Cardiac septum (tissue), 1 donor: ENCODE measurements at regions of chr14 and their contacts with region 1.

Region 1: DNA sequence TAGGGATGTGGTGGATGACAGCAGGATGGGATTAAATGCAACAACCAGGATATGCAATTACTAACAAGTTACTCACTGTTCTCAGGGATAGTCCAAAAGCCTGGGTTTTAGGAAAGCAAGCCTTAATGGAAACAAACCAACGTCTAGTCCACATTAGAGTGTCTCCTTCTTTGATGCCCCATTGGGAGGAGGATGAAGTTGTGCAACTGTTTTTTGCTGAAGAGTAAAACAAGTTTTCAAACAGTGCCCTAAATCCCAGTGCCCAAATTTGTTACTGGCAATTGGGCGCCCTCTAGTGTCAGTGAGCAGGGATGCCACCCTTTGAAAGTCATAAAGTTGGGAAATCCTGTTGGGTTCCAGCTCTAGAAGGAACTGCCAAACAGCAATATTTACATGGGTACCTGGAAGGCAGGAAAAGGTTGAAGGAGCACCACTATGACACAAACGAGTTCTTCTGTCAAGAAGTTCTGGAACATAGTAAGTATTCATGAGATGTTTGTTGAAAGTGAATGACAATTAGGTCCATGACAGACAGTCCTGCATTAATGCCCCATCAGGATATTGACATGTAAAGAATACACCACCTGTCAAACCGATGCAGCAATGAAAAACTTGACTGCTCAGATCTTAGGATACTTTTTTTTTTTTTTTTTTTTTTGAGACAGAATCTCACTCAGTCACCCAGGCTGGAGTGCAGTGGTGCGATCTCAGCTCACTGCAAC is 11.1 kb upstream of the DPF3 start:
- DNase-seq: no peak

Region 2: DNA sequence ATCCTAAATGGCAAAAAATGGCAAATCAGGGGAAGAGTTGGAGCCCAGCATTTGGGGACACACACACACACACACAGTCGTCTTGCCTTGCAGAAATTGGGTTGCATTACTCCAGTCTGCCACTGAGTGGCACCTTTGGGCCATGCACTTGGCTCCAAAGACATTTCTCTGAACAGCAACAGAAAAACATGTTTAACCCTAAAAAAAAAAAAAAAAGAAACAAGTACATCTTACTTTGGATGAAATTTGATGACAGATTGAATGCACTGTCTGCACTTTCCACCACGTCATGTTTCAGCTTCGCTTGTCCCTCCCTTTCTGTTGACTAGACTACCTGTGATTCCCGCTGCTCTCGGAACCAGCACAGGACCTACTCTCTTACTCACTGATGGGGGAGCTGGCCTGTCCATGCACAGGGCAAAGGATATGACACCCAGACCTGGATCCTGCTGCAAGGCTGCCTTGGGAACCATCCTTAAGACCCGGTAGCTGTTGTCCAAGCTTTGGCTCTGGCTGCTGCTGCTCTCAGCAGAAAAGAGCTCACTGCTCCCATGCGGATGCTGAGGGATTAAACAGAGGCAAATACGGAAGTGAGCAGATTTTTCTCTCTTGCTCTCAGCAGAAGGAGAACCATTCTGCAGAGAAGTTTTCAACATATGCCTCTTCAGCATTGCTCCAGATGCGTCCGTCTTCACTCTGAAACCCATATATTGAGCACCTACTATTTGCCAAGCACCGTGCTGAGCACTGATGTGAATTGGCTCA is 387.9 kb before region 1 on chr14:
- intact Hi-C with region 1: loop called (anchors 1 kb)
- DNase-seq: no peak

Region 3: GRCh38 chr14:72544619-72545387 is 360.2 kb before region 1 on chr14:
- intact Hi-C with region 1: loop called (anchors 10 kb)
- DNase-seq: peak; percentile 67

Region 4: DNA sequence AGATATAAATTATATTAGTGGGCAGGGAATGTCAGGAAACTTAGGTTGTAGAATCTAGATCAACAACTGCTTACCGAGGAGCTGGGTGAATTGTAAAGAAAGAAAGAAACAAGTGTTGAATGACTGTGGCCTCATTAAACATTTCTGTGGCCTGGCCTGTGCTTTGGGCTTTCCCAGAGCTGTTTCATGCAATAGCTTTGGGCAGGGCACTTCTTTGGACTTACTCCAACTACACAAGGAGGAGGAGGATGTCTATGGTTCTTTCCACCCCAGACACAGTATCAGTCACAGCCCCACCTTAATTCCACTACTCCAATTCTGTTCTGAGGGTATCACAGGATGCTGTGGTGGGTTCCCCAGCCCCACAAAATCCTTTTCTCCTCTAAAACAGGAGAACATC is 49.1 kb before region 1 on chr14:
- intact Hi-C with region 1: no loop called
- DNase-seq: no peak

Region 5: GRCh38 chr14:72948481-72949138 is 43.6 kb after region 1 on chr14:
- intact Hi-C with region 1: loop called (anchors 5 kb)
- DNase-seq: no peak

Region 6: DNA sequence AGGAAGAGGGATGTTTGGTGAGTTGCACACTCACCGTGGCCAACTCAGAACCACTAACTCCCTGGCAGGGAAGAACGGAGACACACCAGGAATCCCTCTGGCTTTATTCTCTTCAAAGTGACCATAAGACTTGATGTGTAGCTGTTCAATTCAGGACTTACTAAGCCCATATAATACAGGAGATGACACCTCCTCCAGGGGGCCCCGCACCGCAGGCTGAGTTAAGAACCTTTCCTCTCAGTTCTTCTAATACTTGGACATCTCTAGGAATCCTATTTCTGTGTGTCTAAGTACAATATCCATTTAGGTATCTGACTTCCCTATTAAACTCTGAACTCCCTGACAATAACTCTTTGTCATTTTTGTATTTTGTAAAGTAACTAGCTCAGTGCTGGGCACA is 70.8 kb after region 1 on chr14:
- intact Hi-C with region 1: no loop called
- DNase-seq: no peak

Region 7: DNA sequence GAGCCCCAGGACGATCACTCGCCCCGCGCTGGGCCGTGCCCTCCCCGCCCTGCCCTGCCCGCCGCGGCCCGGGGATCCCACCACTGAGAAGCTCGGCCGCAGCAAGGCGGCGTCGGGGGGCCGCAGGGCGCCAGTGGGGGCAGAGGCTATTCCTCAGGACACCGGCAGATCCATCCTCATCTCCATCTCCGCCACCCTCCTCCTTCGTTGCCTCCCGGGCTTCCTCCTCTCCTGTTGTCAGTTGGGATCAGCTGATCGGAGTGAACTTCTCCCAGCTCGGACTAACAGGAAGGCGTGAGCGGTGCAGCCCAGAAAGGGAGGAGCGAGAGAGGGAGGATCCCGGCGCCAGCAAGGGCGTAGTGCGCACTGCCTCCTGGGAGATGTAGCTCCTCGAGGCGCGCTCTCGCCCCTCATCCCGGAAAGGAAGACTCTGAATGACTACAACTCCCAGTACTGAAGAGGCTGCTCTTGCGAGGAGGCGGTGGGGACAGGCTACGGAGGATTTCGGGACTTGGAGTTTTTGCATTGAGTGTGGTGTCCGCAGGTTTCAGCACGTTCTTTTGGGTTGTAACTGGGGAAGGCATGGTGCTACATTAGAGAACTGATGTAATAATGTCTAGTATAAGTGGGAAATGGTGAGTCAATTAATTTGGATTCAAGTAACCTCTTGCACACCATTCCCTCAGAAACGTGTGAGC is 122.0 kb after region 1 on chr14 and contains the start of gene ZFYVE1:
- intact Hi-C with region 1: no loop called
- DNase-seq: peak; percentile 99
- total RNA-seq, gene ZFYVE1: 12.1 TPM